Activated T-helper 1 cell treated with anti-CD3 and anti-CD28 coated beads, Interleukin-12 subunit alpha, Interleukin-12 subunit beta, Interleukin-2, Interleukin-4 antibody, amounts not matched to agents 30 ng/mL and 10 ng/mL and 1 ng/mL, durations not matched to agents 14 hours and 24 hours and 36 hours (primary cell): ENCODE measurements at regions of chr1 and their contacts with region 1.

Region 1: DNA sequence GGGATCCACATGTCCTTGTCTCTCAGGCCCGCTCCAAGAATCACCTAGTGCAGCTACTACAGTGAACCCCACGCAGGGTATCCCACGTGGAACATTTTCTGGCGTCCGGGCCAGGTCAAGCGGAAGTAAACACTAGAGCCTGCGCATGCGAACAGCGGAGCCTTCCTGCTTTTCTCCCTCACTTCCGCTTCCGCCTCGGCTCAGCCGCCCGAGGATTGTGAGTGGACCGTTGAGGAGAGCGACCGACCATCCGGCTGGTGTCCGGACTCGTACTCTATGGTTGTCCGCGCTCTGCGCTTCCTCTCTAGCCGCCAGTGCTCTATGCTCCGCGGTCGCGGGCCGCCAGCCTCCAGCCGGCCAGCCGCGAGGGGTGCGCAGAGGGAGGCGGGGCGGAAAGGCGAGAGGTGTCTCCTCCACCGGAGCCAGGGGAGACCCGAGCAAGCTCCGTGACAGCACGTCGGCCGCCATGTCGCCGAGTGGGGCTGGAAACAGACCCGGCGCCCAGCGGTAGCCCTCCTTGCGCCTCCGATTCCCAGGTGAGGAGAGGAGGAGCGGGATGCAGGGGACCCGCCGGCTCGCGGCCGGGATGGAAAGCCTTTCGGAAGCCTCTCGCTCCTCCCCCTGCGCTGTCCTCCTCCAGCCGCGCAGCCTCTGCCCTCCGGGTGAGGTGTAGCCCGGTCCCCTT is at the starts of genes CNST and TFB2M:
- DNase-seq: peak; percentile 93
- H3K4me3 Mint-ChIP-seq: peak within 1 kb of the TSS; percentile 98
- H3K27ac Mint-ChIP-seq: peak within 1 kb of the TSS; percentile 99
- H3K4me1 Mint-ChIP-seq: peaks cover 48% of the 10 kb centered on the region
- H3K27me3 Mint-ChIP-seq: no peaks in the 10 kb centered on the region
- total RNA-seq, gene CNST: 27.0 and 30.8 TPM in 2 replicates
- total RNA-seq, gene TFB2M: 24.8 and 30.9 TPM in 2 replicates

Region 2: GRCh38 chr1:244599937-244600350 is 1966.3 kb before region 1 on chr1:
- intact Hi-C with region 1: loop called (anchors 5 kb)
- DNase-seq: peak; percentile 54
- H3K4me3 Mint-ChIP-seq: peak overlapping the region; percentile 79
- H3K27ac Mint-ChIP-seq: peak overlapping the region; percentile 94
- H3K4me1 Mint-ChIP-seq: peaks cover 22% of the 10 kb centered on the region
- H3K27me3 Mint-ChIP-seq: peaks cover 9% of the 10 kb centered on the region

Region 3: GRCh38 chr1:244970661-244971551 is 1595.4 kb before region 1 on chr1:
- intact Hi-C with region 1: loop called (anchors 10 kb)
- DNase-seq: peak; percentile 82
- H3K4me3 Mint-ChIP-seq: peak overlapping the region; percentile 92
- H3K27ac Mint-ChIP-seq: peak overlapping the region; percentile 98
- H3K4me1 Mint-ChIP-seq: peaks cover 21% of the 10 kb centered on the region
- H3K27me3 Mint-ChIP-seq: peaks cover 2% of the 10 kb centered on the region

Region 4: DNA sequence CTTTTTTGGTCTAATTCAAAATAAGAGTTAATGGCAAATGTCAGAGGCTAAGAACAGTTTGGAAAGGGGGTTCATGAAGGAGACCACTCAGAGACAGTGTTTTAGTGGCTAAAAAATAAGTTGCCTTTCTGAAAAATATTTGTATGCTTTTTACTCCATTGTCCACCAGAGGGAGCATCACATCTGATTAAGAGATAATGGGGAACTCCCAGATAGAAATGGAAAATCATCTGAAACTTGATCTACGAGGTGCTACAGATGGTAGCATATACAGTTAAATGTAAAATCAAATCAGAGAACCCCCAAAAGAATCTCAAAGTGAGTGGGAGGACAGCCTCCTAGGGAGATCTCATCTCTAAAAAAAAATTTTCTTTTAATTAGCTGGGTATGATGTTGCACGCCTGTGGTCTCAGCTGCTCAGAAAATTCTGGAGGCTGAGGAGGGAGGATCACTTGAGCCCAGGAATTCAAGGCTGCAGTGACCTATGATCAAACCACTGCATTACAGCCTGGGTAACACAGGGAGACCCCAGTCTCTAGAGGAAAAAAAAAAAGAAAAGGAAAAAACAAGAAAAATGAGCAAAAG is 68.8 kb before region 1 on chr1:
- intact Hi-C with region 1: loop called (anchors 1 kb)
- DNase-seq: no peak
- H3K4me3 Mint-ChIP-seq: no peak overlapping the region
- H3K27ac Mint-ChIP-seq: peak overlapping the region; percentile 26
- H3K4me1 Mint-ChIP-seq: peaks cover 11% of the 10 kb centered on the region
- H3K27me3 Mint-ChIP-seq: no peaks in the 10 kb centered on the region

Region 5: GRCh38 chr1:246724016-246724730 is 157.9 kb after region 1 on chr1 and contains the start of gene SCCPDH:
- intact Hi-C with region 1: loop called (anchors 1 kb)
- DNase-seq: peak; percentile 55
- H3K4me3 Mint-ChIP-seq: peak within 1 kb of the TSS; percentile 92
- H3K27ac Mint-ChIP-seq: peak within 1 kb of the TSS; percentile 78
- H3K4me1 Mint-ChIP-seq: peaks cover 10% of the 10 kb centered on the region
- H3K27me3 Mint-ChIP-seq: peaks cover 6% of the 10 kb centered on the region
- total RNA-seq, gene SCCPDH: 23.5 and 24.3 TPM in 2 replicates

Region 6: DNA sequence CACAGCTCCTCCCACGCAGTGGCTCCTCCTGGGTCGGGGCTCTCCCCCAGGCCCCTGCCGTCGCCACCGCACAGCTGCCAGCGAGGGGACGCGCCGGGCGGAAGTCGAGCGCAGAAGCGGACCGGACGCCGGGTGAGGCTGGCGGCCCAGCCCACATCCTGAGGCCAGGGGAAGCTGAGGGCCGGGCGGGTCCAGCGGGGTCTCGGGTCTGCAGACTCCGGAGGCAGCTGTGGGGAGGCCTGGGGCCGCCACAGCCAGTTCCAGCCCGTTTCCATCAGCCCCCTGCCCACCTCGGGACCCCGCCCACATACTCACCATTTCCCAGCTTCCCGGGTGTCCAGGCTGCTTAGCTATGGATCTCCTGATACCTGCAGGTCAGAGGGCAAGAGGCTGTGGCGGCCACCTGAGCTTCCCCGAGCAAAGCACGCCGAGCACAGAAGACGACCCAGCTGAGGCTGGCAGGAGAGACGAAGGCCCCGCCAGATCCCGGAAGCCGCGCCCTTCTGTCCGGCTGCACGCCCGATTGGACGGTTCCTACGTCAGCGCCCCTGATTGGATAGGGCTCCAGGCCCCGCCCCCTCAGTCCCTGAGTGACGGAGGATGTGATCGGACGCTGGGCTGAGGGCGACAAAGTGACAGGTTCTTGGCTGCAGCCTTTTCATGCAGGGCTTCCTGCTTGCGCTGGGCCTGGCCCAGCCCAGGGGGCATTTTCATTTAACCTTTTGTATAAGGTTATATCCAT is 644.3 kb after region 1 on chr1:
- intact Hi-C with region 1: loop called (anchors 2 kb)
- DNase-seq: peak; percentile 93
- H3K4me3 Mint-ChIP-seq: peak overlapping the region; percentile 94
- H3K27ac Mint-ChIP-seq: peak overlapping the region; percentile 94
- H3K4me1 Mint-ChIP-seq: peaks cover 29% of the 10 kb centered on the region
- H3K27me3 Mint-ChIP-seq: no peaks in the 10 kb centered on the region